Naive thymus-derived CD4-positive, alpha-beta T cell (primary cell): ENCODE measurements at regions of chr19 and their contacts with region 1.

Region 1: GRCh38 chr19:41912899-41913537 is 15.2 kb downstream of the ERFL start:
- DNase-seq: peak in 3 of 9 donors; percentile 39 to 46 (median 45)
- ATAC-seq: peak; percentile 32
- H3K4me3 ChIP-seq: no peak overlapping the region
- H3K4me3 Mint-ChIP-seq: peak overlapping the region in 6 of 10 donors; percentile 37 to 71 (median 51)
- H3K27ac ChIP-seq: no peak overlapping the region
- H3K27ac Mint-ChIP-seq: peak overlapping the region in 4 of 9 donors; percentile 35 to 87 (median 78)
- H3K4me1 ChIP-seq: peaks cover 20 to 53% of the 10 kb centered on the region in 2 donors
- H3K4me1 Mint-ChIP-seq: peaks cover 15 to 43% (median 31%) of the 10 kb centered on the region in 7 donors
- H3K27me3 ChIP-seq: peaks cover 0 to 23% of the 10 kb centered on the region in 2 donors
- H3K27me3 Mint-ChIP-seq: peaks cover 0 to 28% (median 0%) of the 10 kb centered on the region in 5 donors

Region 2: GRCh38 chr19:41928221-41928683 is 15.2 kb after region 1 on chr19 and contains the start of gene ERFL:
- CTCF ChIA-PET with region 1: no interaction called
- POLR2A ChIA-PET with region 1: interaction called, 22 read pairs
- intact Hi-C with region 1: loop called (anchors 1 kb)
- DNase-seq: peak in 2 of 9 donors; percentile 32 to 53
- ATAC-seq: peak; percentile 50
- H3K4me3 ChIP-seq: peak within 1 kb of the TSS; percentile 93
- H3K4me3 Mint-ChIP-seq: peak within 1 kb of the TSS in 6 of 10 donors; percentile 88 to 99 (median 91)
- H3K27ac ChIP-seq: peak within 1 kb of the TSS; percentile 70
- H3K27ac Mint-ChIP-seq: peak within 1 kb of the TSS; percentile 75 to 96 (median 90)
- H3K4me1 ChIP-seq: peaks cover 17 to 18% of the 10 kb centered on the region in 2 donors
- H3K4me1 Mint-ChIP-seq: peaks cover 23 to 41% (median 29%) of the 10 kb centered on the region in 7 donors
- H3K27me3 ChIP-seq: no peaks in the 10 kb centered on the region
- H3K27me3 Mint-ChIP-seq: peaks cover 0 to 9% (median 3%) of the 10 kb centered on the region in 5 donors
- total RNA-seq, gene ERFL: 3.0 to 15.0 (median 8.0) TPM

Region 3: DNA sequence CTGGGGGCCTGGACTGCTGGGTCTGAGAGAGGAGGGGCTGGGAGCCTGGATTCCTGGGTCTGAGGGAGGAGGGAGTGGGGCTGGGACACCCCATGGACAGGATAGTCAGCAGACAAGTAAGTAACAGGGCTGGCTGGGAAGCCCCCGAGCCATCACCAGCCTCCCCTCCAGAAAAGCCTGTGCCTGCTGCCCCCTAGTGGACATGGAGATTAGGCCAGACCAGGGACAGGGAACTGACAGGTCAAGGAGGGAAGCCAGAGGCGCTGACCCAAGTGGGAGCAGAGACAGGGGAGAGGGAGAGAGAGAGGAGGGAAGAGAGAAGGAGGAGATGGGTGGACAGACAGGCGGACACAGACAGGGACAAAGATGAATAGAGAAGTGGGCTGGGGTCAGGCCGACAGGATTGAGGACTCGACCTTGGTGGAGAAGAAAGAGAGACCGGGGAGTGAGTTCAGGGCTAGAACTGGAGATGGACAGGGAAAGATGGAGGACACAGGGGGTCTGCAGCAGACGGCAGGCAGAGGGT is 21.9 kb after region 1 on chr19:
- CTCF ChIA-PET with region 1: no interaction called
- POLR2A ChIA-PET with region 1: interaction called, 22 read pairs
- intact Hi-C with region 1: loop called in 1 of 2 experiments (anchors 1 kb)
- DNase-seq: peak; percentile 47 to 78 (median 67)
- ATAC-seq: peak; percentile 83
- H3K4me3 ChIP-seq: no peak overlapping the region
- H3K4me3 Mint-ChIP-seq: peak overlapping the region in 4 of 10 donors; percentile 30 to 66 (median 33)
- H3K27ac ChIP-seq: peak overlapping the region; percentile 40
- H3K27ac Mint-ChIP-seq: peak overlapping the region; percentile 46 to 88 (median 81)
- H3K4me1 ChIP-seq: peaks cover 26 to 29% of the 10 kb centered on the region in 2 donors
- H3K4me1 Mint-ChIP-seq: peaks cover 37 to 63% (median 48%) of the 10 kb centered on the region in 7 donors
- H3K27me3 ChIP-seq: peaks cover 0 to 4% of the 10 kb centered on the region in 2 donors
- H3K27me3 Mint-ChIP-seq: peaks cover 0 to 24% (median 0%) of the 10 kb centered on the region in 5 donors

Region 4: DNA sequence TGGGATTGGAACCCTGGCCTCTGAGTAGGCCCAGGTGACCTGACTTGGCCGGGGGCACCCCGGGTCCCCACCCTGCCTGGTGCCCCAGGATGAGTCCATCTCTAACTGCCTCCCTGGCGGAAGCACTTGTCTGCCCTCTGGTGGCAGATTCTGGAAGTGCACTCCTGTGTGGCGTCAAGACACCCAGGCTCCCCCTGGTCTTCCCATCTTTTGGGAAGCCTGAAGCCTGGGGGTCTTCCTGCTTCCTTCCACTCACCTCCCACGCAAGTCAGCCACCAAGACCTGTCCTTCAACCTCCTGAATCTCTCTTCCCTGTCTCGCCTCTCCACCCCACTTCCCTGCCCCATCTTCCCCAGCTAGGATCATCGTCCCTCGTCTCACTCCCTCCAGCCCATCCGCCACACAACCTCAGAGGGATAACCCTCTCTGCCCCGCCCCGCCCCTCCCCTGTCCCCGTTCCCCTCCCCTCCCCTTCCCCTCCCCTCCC is 38.7 kb after region 1 on chr19:
- CTCF ChIA-PET with region 1: no interaction called
- POLR2A ChIA-PET with region 1: no interaction called
- intact Hi-C with region 1: loop called in 1 of 2 experiments (anchors 2 kb)
- DNase-seq: peak; percentile 63 to 93 (median 78)
- ATAC-seq: peak; percentile 95
- H3K4me3 ChIP-seq: no peak overlapping the region
- H3K4me3 Mint-ChIP-seq: peak overlapping the region in 2 of 10 donors; percentile 54 to 67
- H3K27ac ChIP-seq: peak overlapping the region; percentile 15
- H3K27ac Mint-ChIP-seq: peak overlapping the region in 8 of 9 donors; percentile 48 to 89 (median 63)
- H3K4me1 ChIP-seq: peaks cover 0 to 15% of the 10 kb centered on the region in 2 donors
- H3K4me1 Mint-ChIP-seq: peaks cover 11 to 19% (median 12%) of the 10 kb centered on the region in 7 donors
- H3K27me3 ChIP-seq: no peaks in the 10 kb centered on the region
- H3K27me3 Mint-ChIP-seq: no peaks in the 10 kb centered on the region

Region 5: GRCh38 chr19:42343344-42344110 is 430.5 kb after region 1 on chr19:
- CTCF ChIA-PET with region 1: no interaction called
- POLR2A ChIA-PET with region 1: no interaction called
- intact Hi-C with region 1: no loop called
- DNase-seq: no peak
- ATAC-seq: no peak
- H3K4me3 ChIP-seq: no peak overlapping the region
- H3K4me3 Mint-ChIP-seq: no peak overlapping the region
- H3K27ac ChIP-seq: no peak overlapping the region
- H3K27ac Mint-ChIP-seq: no peak overlapping the region
- H3K4me1 ChIP-seq: no peaks in the 10 kb centered on the region
- H3K4me1 Mint-ChIP-seq: peaks cover 0 to 4% (median 0%) of the 10 kb centered on the region in 7 donors
- H3K27me3 ChIP-seq: no peaks in the 10 kb centered on the region
- H3K27me3 Mint-ChIP-seq: no peaks in the 10 kb centered on the region